Panc1 (cell line): ENCODE measurements at regions of chr12 and their contacts with region 1.

Region 1: DNA sequence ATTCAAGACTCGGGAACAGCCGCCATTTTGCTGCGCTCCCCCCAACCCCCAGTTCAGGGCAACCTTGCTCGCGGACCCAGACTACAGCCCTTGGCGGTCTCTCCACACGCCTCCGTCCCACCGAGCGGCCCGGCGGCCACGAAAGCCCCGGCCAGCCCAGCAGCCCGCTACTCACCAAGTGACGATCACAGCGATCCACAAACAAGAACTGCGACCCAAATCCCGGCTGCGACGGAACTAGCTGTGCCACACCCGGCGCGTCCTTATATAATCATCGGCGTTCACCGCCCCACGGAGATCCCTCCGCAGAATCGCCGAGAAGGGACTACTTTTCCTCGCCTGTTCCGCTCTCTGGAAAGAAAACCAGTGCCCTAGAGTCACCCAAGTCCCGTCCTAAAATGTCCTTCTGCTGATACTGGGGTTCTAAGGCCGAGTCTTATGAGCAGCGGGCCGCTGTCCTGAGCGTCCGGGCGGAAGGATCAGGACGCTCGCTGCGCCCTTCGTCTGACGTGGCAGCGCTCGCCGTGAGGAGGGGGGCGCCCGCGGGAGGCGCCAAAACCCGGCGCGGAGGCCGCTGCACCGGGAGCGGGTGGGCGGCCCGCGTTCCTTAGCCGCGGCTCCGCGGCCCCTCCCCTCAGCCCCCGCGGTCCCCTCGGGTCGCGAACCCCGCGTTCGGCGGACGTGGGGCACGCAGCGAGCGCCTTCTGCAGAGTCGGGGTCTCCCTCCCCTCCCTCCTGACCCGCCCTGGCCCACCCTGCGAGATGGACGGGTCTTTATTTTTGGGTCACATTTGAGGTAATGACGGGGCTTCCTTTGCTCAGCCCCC is at the start of gene UBC:
- DNase-seq: no peak
- ATAC-seq: peak; percentile 35
- H3K4me3 ChIP-seq: peak within 1 kb of the TSS; percentile 91 to 93
- H3K27ac ChIP-seq: peak within 1 kb of the TSS; percentile 100
- H3K4me1 ChIP-seq: peaks cover 53% of the 10 kb centered on the region
- H3K27me3 ChIP-seq: no peaks in the 10 kb centered on the region
- CTCF ChIP-seq: no peak
- total RNA-seq, gene UBC: 1,725 TPM

Region 2: GRCh38 chr12:124609041-124609995 is 305.3 kb before region 1 on chr12:
- CTCF ChIA-PET with region 1: no interaction called
- POLR2A ChIA-PET with region 1: no interaction called
- in situ Hi-C with region 1: no loop called
- intact Hi-C with region 1: no loop called
- DNase-seq: no peak
- ATAC-seq: no peak
- H3K4me3 ChIP-seq: no peak overlapping the region
- H3K27ac ChIP-seq: no peak overlapping the region
- H3K4me1 ChIP-seq: peaks cover 16% of the 10 kb centered on the region
- H3K27me3 ChIP-seq: no peaks in the 10 kb centered on the region
- CTCF ChIP-seq: no peak

Region 3: DNA sequence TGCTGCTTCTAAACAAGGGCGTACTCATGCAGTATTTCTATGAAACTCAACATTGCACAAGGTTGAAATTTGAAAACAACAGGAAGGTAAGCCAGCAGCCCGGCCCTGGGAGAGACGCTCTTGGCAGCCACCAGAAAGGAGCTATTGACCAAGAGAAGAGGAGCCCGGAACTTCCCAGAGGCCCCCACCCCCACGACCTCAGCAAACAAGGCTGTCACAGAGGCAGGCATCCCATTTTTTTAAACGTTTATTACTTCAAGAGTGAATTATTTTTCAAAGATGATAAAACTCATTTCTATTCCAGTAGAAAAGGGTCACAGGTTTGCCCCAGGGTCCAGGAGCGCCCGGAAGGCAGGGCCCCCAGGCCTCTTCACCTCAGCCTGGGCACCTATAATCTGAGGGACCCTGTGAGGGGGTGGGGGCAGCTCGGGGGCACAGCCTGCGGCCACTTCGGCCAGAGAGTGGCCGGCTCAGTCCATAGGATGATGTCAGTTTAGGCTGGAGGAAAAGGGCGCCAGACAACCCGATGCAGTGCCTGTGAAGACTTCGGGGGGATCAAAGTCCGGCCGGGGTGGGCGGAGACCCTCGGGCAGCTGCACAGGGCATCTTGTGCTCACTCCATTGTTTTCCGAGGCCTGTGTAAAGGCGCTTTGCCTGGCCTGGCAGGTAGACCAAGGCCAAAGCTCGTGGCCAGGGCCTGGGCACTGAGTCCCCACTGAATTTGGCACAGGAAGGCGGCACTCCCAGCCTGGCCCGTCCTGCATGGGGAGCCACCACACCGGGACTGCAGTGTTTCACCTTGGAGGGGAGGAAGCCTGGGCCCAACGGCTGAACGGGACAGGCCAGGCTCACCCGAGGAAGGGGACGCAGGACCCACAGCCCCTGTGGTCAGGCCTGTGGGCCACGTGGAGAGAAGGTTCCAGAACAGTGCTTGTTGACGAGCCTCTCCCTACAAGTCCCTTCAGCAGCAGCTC is 136.9 kb before region 1 on chr12:
- CTCF ChIA-PET with region 1: no interaction called
- POLR2A ChIA-PET with region 1: interaction called, 19 read pairs
- in situ Hi-C with region 1: no loop called
- intact Hi-C with region 1: loop called (anchors 10 kb)
- DNase-seq: no peak
- ATAC-seq: no peak
- H3K4me3 ChIP-seq: no peak overlapping the region
- H3K27ac ChIP-seq: no peak overlapping the region
- H3K4me1 ChIP-seq: peaks cover 10% of the 10 kb centered on the region; the same call in 1 of the 2 replicates
- H3K27me3 ChIP-seq: no peaks in the 10 kb centered on the region
- CTCF ChIP-seq: no peak

Region 4: DNA sequence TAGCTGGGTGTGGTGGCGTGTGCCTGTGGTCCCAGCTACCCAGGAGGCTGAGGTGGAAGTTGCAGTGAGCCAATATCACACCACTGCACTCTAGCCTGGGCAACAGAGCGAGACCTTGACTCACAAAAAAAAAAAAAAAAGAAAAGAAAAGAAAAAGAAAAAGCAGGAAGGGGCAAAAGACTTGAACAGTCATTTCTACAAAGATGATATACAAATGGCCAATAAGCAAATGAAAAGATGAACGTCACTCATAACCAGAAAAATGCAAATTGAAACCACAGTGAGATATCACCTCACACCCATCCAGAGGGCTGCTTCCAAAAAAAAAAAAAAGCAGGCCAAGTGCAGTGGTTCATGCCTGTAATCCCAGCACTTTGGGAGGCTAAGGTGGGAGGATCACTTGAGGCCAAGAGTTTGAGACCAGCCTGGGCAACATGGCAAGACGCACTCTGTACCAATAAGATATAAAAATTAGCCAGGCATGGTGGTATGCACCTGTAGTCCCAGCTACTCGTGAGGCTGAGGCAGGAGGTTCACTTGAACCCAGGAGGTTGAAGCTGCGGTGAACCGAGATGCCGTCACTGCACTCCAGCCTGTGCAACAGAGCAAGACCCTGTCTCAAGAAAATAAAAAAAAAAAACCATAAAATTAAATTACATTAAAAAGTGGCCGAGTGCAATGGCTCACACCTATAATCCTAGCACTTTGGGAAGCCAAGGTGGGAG is 20.7 kb before region 1 on chr12:
- CTCF ChIA-PET with region 1: no interaction called
- POLR2A ChIA-PET with region 1: interaction called, 10 read pairs
- in situ Hi-C with region 1: no loop called
- intact Hi-C with region 1: no loop called
- DNase-seq: no peak
- ATAC-seq: no peak
- H3K4me3 ChIP-seq: no peak overlapping the region
- H3K27ac ChIP-seq: no peak overlapping the region
- H3K4me1 ChIP-seq: peaks cover 4% of the 10 kb centered on the region; the same call in 1 of the 2 replicates
- H3K27me3 ChIP-seq: no peaks in the 10 kb centered on the region
- CTCF ChIP-seq: no peak

Region 5: GRCh38 chr12:124927201-124928094 is 12.8 kb after region 1 on chr12:
- CTCF ChIA-PET with region 1: no interaction called
- POLR2A ChIA-PET with region 1: interaction called, 16 read pairs
- in situ Hi-C with region 1: no loop called
- intact Hi-C with region 1: no loop called
- DNase-seq: no peak
- ATAC-seq: peak; percentile 79
- H3K4me3 ChIP-seq: peak overlapping the region; percentile 87 to 100
- H3K27ac ChIP-seq: peak overlapping the region; percentile 96
- H3K4me1 ChIP-seq: peaks cover 13% of the 10 kb centered on the region
- H3K27me3 ChIP-seq: no peaks in the 10 kb centered on the region
- CTCF ChIP-seq: no peak

Region 6: DNA sequence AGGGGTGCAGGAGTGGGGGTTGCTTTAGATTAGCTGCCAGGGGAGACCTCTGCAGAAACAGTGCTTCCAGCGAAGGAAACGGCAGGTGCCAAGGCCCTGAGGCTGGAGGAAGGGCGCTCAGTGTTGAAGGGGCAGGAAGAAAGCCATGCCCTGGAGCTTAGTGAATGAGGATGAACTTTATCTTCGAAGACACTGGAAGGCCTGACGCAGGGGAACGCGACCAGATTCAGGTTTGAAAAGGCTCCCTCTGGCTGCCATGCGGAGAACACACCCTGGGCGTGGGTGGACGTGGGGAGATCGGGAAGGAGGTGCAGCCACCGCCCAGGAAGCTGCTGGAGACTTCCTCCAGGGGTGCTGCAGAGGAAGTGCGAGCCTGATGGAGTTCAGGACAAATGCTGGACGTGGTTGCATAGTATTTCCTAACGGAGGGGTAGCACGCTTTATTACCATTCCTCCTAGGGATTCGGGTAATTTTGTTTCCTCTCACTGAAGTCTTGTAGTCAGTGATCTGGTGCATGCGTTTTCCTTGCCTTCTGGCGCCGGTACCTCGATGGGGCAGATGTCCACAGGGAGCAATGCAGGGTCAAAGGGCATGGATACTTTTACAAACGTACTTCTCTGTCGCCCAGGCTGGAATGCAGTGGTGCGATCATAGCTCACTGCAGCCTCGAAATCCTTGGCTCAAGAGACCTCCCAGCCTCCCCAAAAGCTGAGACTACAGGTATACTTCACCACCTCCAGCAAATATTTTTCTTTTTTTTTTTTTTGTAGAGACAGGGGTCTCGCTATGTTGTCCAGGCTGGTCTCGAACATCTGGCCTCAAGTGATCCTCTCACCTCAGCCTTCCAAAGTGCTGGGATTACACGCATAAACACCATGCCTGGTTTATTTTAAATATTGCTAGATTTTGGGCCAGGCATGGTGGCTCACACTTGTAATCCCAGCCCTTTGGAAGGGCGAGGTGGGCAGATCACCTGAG is 26.2 kb after region 1 on chr12:
- CTCF ChIA-PET with region 1: interaction called, 6 read pairs
- POLR2A ChIA-PET with region 1: interaction called, 14 read pairs
- in situ Hi-C with region 1: no loop called
- intact Hi-C with region 1: no loop called
- DNase-seq: no peak
- ATAC-seq: peak; percentile 67
- H3K4me3 ChIP-seq: peak overlapping the region; percentile 44 to 66
- H3K27ac ChIP-seq: peak overlapping the region; percentile 97
- H3K4me1 ChIP-seq: peaks cover 29% of the 10 kb centered on the region
- H3K27me3 ChIP-seq: no peaks in the 10 kb centered on the region
- CTCF ChIP-seq: peak; percentile 93

Region 7: DNA sequence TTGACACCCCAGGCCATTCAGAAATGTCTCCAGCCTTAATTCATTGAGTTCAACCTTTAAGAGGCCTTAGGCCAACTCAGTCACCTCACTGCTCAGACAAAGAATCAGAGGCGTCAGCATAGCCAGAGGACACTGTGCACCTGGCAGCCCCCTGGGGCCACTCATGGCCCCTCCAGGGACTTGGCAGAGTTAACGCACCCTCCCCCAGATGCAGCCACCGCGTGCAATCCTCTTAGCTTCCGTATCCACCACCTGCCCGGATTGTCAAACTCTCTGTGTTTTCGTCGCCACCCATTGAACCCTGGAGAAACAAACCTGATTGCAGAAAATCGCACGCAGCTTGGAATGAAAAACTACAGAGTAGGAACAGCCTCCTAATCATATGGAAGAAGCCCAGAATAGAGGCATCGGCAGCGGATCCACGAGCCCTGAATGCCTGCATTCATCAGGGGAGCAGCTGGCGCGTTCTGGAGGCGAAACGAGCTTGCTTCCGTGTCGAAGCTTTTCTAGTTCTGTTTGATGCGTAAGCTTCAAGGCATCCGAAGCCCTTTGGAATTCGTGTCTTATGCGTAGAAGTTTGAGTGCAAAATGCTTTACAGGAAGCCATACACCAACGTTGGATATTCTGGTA is 101.2 kb after region 1 on chr12:
- CTCF ChIA-PET with region 1: no interaction called
- POLR2A ChIA-PET with region 1: interaction called, 10 read pairs
- in situ Hi-C with region 1: no loop called
- intact Hi-C with region 1: no loop called
- DNase-seq: no peak
- ATAC-seq: no peak
- H3K4me3 ChIP-seq: no peak overlapping the region
- H3K27ac ChIP-seq: no peak overlapping the region
- H3K4me1 ChIP-seq: no peaks in the 10 kb centered on the region
- H3K27me3 ChIP-seq: no peaks in the 10 kb centered on the region
- CTCF ChIP-seq: no peak